IMR-90 (cell line): ENCODE measurements at regions of chr6 and their contacts with region 1.

Region 1: DNA sequence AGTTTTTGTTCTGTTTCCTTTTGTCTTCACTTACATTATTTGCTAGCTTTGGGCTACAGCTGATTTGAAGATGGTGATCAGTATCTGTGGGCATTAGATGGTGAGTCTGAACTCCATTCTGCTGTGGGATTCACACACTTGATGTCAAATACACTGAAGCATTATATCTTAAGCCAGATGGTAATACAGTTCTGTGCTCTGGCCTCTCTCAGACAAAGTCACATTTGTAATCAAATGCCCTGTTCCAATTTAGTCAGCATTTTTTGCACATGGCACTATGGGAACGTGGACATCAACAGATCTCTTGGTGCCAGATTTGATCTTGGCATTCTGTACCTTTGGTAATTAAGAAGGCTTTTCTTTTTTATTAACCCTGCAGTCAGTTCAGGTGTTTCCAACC is 56.0 kb downstream of the SASH1 start:
- DNase-seq: no peak
- ATAC-seq: no peak
- H3K4me3 ChIP-seq: no peak overlapping the region
- H3K27ac ChIP-seq: no peak overlapping the region
- H3K4me1 ChIP-seq: peaks cover 5% of the 10 kb centered on the region
- H3K27me3 ChIP-seq: no peaks in the 10 kb centered on the region
- CTCF ChIP-seq: no peak
- POLR2A ChIP-seq: no peak
- RAD21 ChIP-seq: no peak

Region 2: GRCh38 chr6:148379966-148380713 is 18.5 kb before region 1 on chr6:
- CTCF ChIA-PET with region 1: interaction called, 4 read pairs
- POLR2A ChIA-PET with region 1: interaction called, 16 read pairs
- dilution Hi-C with region 1: no loop called
- in situ Hi-C with region 1: no loop called
- intact Hi-C with region 1: no loop called
- DNase-seq: no peak
- ATAC-seq: no peak
- H3K4me3 ChIP-seq: no peak overlapping the region
- H3K27ac ChIP-seq: no peak overlapping the region
- H3K4me1 ChIP-seq: peaks cover 3% of the 10 kb centered on the region
- H3K27me3 ChIP-seq: no peaks in the 10 kb centered on the region
- CTCF ChIP-seq: no peak
- POLR2A ChIP-seq: no peak
- RAD21 ChIP-seq: no peak

Region 3: DNA sequence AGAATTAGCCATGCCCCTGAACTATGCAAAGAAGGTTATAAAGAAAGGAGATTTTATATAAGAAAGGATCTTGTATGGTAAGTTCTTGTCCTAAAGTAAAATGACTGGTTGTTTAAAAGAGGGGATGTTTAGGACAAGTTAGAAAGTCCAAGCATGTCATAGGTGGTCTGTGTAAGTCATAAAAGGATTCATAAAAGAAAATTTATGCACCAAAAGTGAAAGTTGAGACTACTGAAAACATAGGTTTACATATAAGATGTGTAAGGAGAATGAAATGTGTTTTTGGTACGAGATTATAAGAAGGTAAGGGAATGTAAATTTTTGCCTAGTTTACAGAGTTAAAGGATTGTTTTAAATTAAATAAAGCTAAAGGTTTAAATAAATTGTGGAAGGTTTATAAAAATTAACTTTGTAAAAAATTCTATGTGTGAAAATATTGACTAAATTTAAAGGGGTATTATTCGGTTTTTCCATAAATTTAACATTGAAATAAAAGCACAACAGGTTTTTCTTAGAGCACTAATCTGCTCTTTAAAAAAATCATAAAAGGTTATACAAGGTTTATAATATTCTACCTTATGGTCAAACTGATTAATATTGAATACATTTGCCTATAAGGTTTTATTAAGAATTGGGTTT is 254.6 kb after region 1 on chr6:
- CTCF ChIA-PET with region 1: no interaction called
- POLR2A ChIA-PET with region 1: no interaction called
- dilution Hi-C with region 1: no loop called
- in situ Hi-C with region 1: no loop called
- intact Hi-C with region 1: no loop called
- DNase-seq: no peak
- ATAC-seq: no peak
- H3K4me3 ChIP-seq: no peak overlapping the region
- H3K27ac ChIP-seq: no peak overlapping the region
- H3K4me1 ChIP-seq: 0 out of 2 replicates have a peak, but pooled peaks cover 1% of the 10 kb centered on the region
- H3K27me3 ChIP-seq: no peaks in the 10 kb centered on the region; the same call in 1 of the 2 replicates
- CTCF ChIP-seq: no peak
- POLR2A ChIP-seq: no peak
- RAD21 ChIP-seq: no peak

Region 4: GRCh38 chr6:148667395-148667794 is 268.7 kb after region 1 on chr6:
- CTCF ChIA-PET with region 1: no interaction called
- POLR2A ChIA-PET with region 1: interaction called, 15 read pairs
- dilution Hi-C with region 1: no loop called
- in situ Hi-C with region 1: no loop called
- intact Hi-C with region 1: no loop called
- DNase-seq: no peak
- ATAC-seq: no peak
- H3K4me3 ChIP-seq: no peak overlapping the region
- H3K27ac ChIP-seq: no peak overlapping the region
- H3K4me1 ChIP-seq: no peaks in the 10 kb centered on the region
- H3K27me3 ChIP-seq: no peaks in the 10 kb centered on the region
- CTCF ChIP-seq: no peak
- POLR2A ChIP-seq: no peak
- RAD21 ChIP-seq: no peak